Pancreas (tissue), 10 donors: ENCODE measurements at regions of chrX and their contacts with region 1.

Region 1: DNA sequence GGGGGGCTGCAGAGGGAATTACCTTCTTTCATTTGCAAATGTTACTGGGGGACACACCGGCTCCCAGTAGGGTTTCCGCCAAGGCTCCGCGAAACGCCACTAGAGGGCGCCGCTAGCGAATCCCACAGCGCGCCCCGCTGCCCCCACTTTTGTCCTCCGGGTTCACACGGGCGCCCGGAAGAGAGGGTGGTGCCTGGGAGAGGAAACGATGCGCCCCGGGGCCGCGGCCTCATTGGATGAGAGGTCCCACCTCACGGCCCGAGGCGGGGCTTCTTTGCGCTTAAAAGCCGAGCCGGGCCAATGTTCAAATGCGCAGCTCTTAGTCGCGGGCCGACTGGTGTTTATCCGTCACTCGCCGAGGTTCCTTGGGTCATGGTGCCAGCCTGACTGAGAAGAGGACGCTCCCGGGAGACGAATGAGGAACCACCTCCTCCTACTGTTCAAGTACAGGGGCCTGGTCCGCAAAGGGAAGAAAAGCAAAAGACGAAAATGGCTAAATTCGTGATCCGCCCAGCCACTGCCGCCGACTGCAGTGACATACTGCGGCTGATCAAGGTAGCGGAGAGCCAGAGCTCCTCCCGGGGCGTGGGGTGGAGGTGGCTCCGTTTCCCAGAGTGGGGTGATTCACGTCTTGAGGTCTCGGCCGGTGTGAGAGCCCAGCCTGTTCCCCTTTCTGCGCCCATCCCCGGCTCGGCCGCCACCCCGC is at the start of gene SAT1:
- DNase-seq: peak; percentile 93 to 97 (median 95)
- ATAC-seq: peak; percentile 91 to 97 (median 94)
- H3K4me3 ChIP-seq: peak within 1 kb of the TSS; percentile 30 to 67 (median 46)
- H3K27ac ChIP-seq: peak within 1 kb of the TSS; percentile 73 to 93 (median 84)
- H3K4me1 ChIP-seq: no peaks in the 10 kb centered on the region
- H3K27me3 ChIP-seq: peaks cover 0 to 10% (median 0%) of the 10 kb centered on the region in 4 donors
- CTCF ChIP-seq: peak; percentile 53 to 67 (median 65)
- total RNA-seq, gene SAT1: 51.1 to 376 (median 71.6) TPM

Region 2: GRCh38 chrX:23726191-23726590 is 56.8 kb before region 1 on chrX:
- intact Hi-C with region 1: no loop called
- DNase-seq: no peak
- ATAC-seq: no peak
- H3K4me3 ChIP-seq: no peak overlapping the region
- H3K27ac ChIP-seq: no peak overlapping the region
- H3K4me1 ChIP-seq: no peaks in the 10 kb centered on the region
- H3K27me3 ChIP-seq: no peaks in the 10 kb centered on the region
- CTCF ChIP-seq: no peak

Region 3: DNA sequence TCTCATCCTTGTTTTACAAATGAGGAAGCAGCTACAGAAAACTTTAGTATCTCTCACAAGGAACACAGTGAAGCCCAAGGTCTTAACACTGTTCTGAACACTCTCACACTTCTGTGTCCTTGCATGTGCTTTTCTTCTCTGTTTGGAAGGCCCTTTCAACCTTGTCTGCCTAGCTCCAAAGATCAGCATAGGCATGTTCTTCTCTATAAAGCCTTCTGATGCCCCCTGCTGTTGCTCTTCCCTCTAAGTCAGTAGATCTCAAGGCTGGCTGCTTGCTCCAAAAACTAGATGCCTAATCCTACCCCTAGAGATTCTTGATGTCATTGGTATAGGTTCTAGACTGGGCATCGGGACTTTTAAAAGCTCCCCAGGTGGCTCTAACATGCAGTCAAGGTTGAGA is 118.8 kb after region 1 on chrX:
- intact Hi-C with region 1: loop called in 2 of 3 experiments (anchors 5 to 10 kb)
- DNase-seq: peak in 3 of 6 donors; percentile 43 to 54 (median 44)
- ATAC-seq: peak; percentile 83 to 93 (median 90)
- H3K4me3 ChIP-seq: peak overlapping the region in 1 of 4 donors; percentile 11
- H3K27ac ChIP-seq: peak overlapping the region in 2 of 4 donors; percentile 50 to 67
- H3K4me1 ChIP-seq: peaks cover 0 to 6% (median 0%) of the 10 kb centered on the region in 3 donors
- H3K27me3 ChIP-seq: no peaks in the 10 kb centered on the region
- CTCF ChIP-seq: peak in 1 of 4 donors; percentile 14